Uterus (tissue), 4 donors: ENCODE measurements at regions of chr14 and their contacts with region 1.

Region 1: GRCh38 chr14:24431569-24432258 is 2.0 kb downstream of the KHNYN start:
- DNase-seq: peak; percentile 88 to 91
- H3K4me3 ChIP-seq: no peak overlapping the region
- H3K27ac ChIP-seq: peak overlapping the region; percentile 85 to 95
- H3K4me1 ChIP-seq: peaks cover 0 to 11% of the 10 kb centered on the region in 2 donors
- H3K27me3 ChIP-seq: no peaks in the 10 kb centered on the region
- CTCF ChIP-seq: peak; percentile 84 to 92 (median 90)
- POLR2A ChIP-seq: no peak

Region 2: DNA sequence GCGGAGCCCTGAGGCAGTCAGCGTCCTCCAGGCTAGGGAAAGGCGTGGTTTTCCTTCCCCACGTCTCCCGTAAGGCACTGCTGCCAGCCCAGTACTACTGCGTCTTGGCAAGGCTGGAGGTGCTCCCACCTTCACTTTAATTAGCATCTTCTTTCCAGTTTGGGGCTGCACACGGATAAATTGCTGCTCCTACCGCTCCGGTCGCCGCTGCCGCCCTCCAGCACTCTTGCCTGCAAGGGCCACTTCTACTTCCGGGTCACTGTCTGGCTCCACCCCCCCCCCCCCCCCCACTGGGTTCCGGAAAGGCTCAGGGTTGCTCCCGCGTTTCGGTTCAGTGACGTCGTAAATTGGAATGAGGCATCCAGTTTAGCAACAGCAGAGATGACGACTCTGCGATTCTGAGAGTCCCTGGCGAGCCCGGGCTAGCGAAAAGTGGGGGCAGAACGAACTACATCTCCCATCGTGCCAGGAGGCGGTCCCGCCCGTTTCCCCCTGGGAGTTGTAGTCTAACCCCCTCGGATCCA is 199.5 kb before region 1 on chr14 and contains the start of gene NEDD8:
- intact Hi-C with region 1: loop called (anchors 10 kb)
- DNase-seq: peak; percentile 95 to 96
- H3K4me3 ChIP-seq: peak within 1 kb of the TSS; percentile 66 to 97
- H3K27ac ChIP-seq: peak within 1 kb of the TSS; percentile 83 to 84
- H3K4me1 ChIP-seq: peaks cover 0 to 10% of the 10 kb centered on the region in 2 donors
- H3K27me3 ChIP-seq: no peaks in the 10 kb centered on the region
- CTCF ChIP-seq: no peak
- POLR2A ChIP-seq: peak in 1 of 2 donors; percentile 41
- total RNA-seq, gene NEDD8: 61.2 to 1,004 (median 192) TPM

Region 3: GRCh38 chr14:24332268-24332993 is 99.3 kb before region 1 on chr14:
- intact Hi-C with region 1: loop called (anchors 10 kb)
- DNase-seq: peak; percentile 55 to 58
- H3K4me3 ChIP-seq: no peak overlapping the region
- H3K27ac ChIP-seq: no peak overlapping the region
- H3K4me1 ChIP-seq: peaks cover 0 to 14% of the 10 kb centered on the region in 2 donors
- H3K27me3 ChIP-seq: peaks cover 0 to 27% of the 10 kb centered on the region in 2 donors
- CTCF ChIP-seq: peak; percentile 47 to 68 (median 63)
- POLR2A ChIP-seq: no peak

Region 4: GRCh38 chr14:24366721-24367513 is 64.8 kb before region 1 on chr14:
- intact Hi-C with region 1: loop called (anchors 5 kb)
- DNase-seq: peak; percentile 92 to 96
- H3K4me3 ChIP-seq: peak overlapping the region; percentile 69 to 81
- H3K27ac ChIP-seq: peak overlapping the region; percentile 94 to 99
- H3K4me1 ChIP-seq: no peaks in the 10 kb centered on the region
- H3K27me3 ChIP-seq: no peaks in the 10 kb centered on the region
- CTCF ChIP-seq: no peak
- POLR2A ChIP-seq: peak; percentile 82 to 83

Region 5: GRCh38 chr14:24456980-24457379 is 25.3 kb after region 1 on chr14:
- intact Hi-C with region 1: no loop called
- DNase-seq: no peak
- H3K4me3 ChIP-seq: no peak overlapping the region
- H3K27ac ChIP-seq: no peak overlapping the region
- H3K4me1 ChIP-seq: no peaks in the 10 kb centered on the region
- H3K27me3 ChIP-seq: no peaks in the 10 kb centered on the region
- CTCF ChIP-seq: no peak
- POLR2A ChIP-seq: no peak